PC-9 (cell line): ENCODE measurements at regions of chr9 and their contacts with region 1.

Region 1: DNA sequence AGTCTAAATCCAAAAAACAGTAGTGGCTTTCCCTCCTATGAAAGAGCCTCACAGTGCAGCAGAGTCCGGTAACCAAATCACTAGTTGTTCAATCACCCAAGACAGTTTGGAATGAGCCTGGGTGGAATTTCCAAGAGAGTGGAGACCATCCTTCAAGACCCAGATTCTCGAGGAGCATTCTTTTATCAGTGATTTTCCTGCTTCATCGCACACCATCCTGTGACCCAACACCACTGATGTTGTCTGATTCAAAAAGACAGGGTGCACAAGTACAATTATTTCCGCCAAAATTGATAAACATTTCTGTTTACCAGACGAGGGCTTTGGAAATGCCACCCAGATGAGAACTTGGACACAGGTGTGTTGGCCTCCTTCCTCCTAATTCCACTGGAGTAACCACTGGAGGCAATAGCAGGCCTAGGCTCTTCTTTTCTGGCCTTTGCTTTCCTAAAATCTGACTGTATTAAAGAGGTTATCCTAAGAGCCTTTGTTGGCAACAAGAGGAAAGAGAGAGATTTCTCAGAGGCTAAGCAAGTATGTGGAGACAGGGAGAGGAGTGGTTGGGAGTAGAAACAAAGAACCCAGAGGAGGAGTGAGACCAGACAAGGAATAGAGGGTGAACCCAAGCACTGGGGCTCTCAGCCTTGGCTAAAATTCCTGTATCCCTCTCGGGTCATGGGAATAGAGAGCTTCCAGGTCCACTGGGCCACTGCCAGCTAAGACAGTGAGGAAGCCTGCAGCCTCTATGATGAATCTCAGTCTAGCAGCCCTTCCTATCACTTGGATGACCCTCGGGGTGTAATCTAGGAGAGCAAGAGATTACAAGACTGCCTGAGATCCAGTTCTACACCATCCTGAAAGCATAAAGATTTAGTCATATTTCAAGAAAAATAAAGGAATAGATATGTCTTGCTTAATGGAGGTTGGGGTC is 56.1 kb upstream of the S1PR3 start:
- DNase-seq: no peak
- H3K4me3 ChIP-seq: no peak overlapping the region
- H3K27ac ChIP-seq: no peak overlapping the region
- H3K4me1 ChIP-seq: peaks cover 32% of the 10 kb centered on the region
- H3K27me3 ChIP-seq: no peaks in the 10 kb centered on the region
- CTCF ChIP-seq: no peak

Region 2: DNA sequence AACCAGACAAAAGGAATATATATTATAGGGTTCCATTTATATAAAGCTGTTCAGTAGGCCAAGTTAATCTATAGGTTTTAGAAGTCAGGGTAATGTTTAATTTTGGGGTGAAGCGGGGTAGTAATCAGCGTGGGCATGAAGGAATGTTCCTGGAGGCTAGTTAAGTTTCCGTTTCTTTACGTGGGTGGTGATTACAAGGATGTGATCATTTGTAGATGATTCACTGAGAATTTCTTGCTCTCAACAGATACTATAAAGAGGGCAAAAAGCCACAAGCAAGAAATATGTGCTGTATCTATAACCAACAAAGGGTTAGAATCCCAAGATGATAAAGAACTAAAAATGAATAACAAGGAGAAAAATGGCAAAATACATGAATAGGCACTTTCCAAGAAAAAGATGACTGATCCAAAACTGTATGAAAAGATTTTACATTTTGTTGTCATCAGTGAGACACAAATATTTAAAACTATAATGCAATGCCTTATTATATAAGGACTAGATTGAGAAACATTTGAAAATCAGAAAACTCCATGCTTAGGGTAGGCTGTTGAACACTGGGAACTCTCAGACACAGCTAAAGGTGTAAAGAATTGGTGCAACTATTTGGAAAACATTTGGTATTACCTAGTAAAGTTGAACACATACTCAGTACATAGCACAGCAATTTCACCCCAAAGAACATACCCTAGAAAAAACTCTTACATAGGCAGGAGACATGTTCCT is 168.2 kb before region 1 on chr9:
- CTCF ChIA-PET with region 1: interaction called, 14 read pairs
- POLR2A ChIA-PET with region 1: no interaction called
- intact Hi-C with region 1: no loop called
- DNase-seq: no peak
- H3K4me3 ChIP-seq: no peak overlapping the region
- H3K27ac ChIP-seq: peak overlapping the region; percentile 27
- H3K4me1 ChIP-seq: 0 out of 2 replicates have a peak, but pooled peaks cover 5% of the 10 kb centered on the region
- H3K27me3 ChIP-seq: no peaks in the 10 kb centered on the region
- CTCF ChIP-seq: no peak

Region 3: DNA sequence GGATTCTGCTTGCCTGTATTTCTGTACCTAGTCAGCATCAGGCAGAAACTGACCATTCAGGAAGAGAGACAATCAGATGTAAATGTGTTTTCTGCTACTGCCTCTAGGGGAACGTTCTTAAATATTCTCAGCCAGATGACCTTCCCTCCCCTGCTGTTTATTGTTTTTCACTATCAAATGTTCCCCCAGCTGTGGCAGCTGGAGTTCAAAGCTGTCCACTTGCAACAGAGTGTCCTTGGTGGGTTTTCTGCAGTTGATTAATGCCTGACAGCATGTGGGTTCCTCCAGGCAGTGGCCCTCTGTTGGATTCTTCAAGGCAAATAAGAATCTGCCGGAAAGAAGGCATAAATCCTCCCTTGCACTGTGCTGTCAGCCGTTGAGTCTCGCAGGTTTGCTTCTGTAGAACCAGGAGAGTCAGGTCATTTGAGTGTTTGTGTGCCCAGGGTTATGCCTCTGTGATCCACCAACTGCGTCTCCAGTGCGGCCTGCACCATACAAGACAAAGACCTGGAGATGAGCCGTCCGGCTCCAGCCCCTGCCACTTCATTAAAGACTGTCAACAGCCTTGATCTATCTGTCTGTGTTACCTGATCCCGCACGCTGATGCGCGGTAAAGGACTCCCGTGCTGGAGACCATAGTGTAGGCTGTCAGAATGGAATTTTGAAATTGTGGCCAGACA is 873.1 kb after region 1 on chr9:
- CTCF ChIA-PET with region 1: no interaction called
- POLR2A ChIA-PET with region 1: no interaction called
- intact Hi-C with region 1: no loop called
- DNase-seq: no peak
- H3K4me3 ChIP-seq: no peak overlapping the region
- H3K27ac ChIP-seq: no peak overlapping the region
- H3K4me1 ChIP-seq: no peaks in the 10 kb centered on the region
- H3K27me3 ChIP-seq: peaks cover 84% of the 10 kb centered on the region
- CTCF ChIP-seq: no peak